ENCODE measurements at regions of chr13 and their contacts with region 1.

Region 1: DNA sequence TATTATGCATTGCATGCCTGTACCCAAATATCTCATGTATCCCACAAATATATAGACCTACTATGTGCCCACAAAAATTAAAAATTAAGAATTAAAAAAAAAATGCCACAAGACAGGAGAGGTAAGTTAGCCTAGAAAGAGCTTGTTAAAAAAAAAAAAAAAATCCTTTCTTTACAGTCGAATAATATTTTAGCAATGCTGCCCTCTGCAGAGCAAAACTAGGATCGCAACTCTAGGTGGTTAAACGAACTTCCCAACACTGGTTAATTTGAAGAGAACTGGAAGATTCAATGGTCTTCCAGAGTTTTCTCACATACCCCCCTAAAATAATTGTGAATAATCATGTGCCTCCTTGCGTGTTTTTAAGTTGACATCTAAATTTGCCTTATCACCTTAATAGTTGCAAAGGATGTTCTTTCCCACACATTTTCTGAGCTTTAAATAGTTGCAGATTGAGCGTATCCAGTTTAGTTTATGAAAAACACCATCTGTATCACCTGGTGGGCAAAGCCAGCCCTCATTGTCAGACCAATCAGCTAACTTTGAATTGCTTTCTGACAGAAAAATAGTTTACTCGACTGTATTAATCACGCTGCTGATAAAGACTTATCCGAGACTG is 47.4 kb upstream of the RCBTB2 start:
- DNase-seq: peak in 2 of 4 donors; percentile 57 to 74
- ATAC-seq: peak; percentile 83
- H3K4me3 ChIP-seq: no peak overlapping the region
- H3K27ac ChIP-seq: no peak overlapping the region
- H3K4me1 ChIP-seq: peaks cover 8 to 42% of the 10 kb centered on the region in 2 donors
- H3K27me3 ChIP-seq: no peaks in the 10 kb centered on the region
- CTCF ChIP-seq: peak; percentile 47 to 85

Region 2: DNA sequence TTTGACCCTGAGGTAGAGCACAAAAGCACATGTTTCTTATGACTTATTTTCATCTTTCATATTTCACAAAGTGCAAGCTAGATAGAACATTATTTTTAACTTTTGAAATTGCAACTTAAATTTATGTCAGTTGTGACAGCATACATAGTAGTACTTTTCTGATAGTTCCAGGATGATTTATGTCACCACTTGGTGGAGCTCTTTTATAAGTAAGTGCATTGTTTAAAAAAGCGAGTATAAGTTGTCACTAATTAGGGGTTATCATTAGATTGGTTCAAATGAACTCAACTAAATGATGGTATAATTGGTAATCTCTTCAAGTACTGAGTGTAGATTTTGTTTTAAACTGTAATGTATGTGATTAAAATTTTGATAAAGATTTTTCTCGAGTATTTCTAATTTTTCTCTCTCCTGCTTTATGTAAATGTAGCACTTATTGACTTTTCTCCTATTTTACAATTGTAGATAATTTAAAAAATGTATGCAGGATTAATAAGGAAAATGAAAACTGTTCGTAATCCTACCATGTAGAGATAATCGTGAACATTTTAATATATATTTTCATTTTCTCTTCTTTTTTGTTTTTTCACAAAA is 245.7 kb before region 1 on chr13:
- intact Hi-C with region 1: loop called in 1 of 2 experiments (anchors 5 kb)
- DNase-seq: peak in 1 of 4 donors; percentile 25
- ATAC-seq: peak; percentile 84
- H3K4me3 ChIP-seq: no peak overlapping the region
- H3K27ac ChIP-seq: no peak overlapping the region
- H3K4me1 ChIP-seq: peaks cover 0 to 9% of the 10 kb centered on the region in 2 donors
- H3K27me3 ChIP-seq: no peaks in the 10 kb centered on the region
- CTCF ChIP-seq: peak; percentile 30 to 41

Region 3: GRCh38 chr13:48380581-48380980 is 199.7 kb before region 1 on chr13:
- intact Hi-C with region 1: no loop called
- DNase-seq: no peak
- ATAC-seq: no peak
- H3K4me3 ChIP-seq: no peak overlapping the region
- H3K27ac ChIP-seq: no peak overlapping the region
- H3K4me1 ChIP-seq: no peaks in the 10 kb centered on the region
- H3K27me3 ChIP-seq: no peaks in the 10 kb centered on the region
- CTCF ChIP-seq: no peak

Region 4: DNA sequence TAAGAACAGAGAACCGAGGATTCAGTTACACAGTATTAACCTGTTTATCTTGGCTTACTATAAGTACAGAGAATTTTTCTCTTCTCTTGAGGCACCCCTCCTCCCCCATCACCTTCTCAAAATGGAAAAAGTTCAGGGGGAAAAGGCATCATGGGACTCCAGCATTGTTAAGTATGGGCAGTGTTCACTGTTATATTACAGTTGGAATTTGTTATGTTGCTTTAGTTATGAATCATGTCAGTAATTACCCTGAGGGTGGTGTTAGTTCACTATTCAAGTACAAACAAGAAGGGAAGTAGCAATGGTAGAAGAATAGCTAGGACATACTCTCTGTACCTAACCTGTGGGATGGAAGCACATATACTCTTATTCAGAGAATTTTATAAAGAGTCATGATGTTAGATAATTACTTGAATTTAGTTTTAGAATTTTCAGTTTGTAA is 179.4 kb before region 1 on chr13:
- intact Hi-C with region 1: loop called in 1 of 2 experiments (anchors 10 kb)
- DNase-seq: peak in 1 of 4 donors; percentile 19
- ATAC-seq: peak; percentile 86
- H3K4me3 ChIP-seq: no peak overlapping the region
- H3K27ac ChIP-seq: peak overlapping the region; percentile 48 to 60
- H3K4me1 ChIP-seq: peaks cover 33 to 56% of the 10 kb centered on the region in 2 donors
- H3K27me3 ChIP-seq: no peaks in the 10 kb centered on the region
- CTCF ChIP-seq: no peak

Region 5: DNA sequence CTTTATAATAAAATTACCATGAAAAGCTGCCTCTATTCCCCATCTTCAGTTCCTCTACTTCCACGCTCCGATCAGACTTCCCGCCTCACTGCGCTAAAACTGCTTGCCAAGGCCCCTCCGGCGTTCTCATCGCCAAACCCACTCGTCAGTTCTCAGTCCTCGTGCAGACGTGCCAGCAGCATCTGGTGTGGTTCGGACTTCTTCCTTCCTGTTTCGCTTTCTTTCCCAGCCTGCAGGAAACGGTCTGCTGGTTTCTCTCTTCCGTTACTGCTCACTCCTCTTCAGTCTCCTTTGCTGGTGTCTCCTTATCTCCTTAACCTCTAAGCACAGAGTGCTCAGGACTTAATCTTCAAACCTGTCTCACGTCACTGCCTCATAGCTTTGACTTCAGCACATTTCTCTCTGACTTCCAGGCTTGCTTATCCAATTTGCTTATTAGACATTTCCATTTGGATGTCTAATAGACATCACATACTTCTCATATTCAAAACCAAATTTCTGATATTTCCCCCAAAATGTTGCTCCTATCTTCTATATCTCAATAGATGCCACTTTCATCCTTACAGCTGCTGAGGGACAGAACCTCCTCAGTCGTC is 87.7 kb before region 1 on chr13:
- intact Hi-C with region 1: loop called in 1 of 2 experiments (anchors 10 kb)
- DNase-seq: peak; percentile 35 to 86 (median 76)
- ATAC-seq: peak; percentile 86
- H3K4me3 ChIP-seq: peak overlapping the region; percentile 8 to 37
- H3K27ac ChIP-seq: peak overlapping the region; percentile 77 to 91
- H3K4me1 ChIP-seq: peaks cover 10 to 68% of the 10 kb centered on the region in 2 donors
- H3K27me3 ChIP-seq: no peaks in the 10 kb centered on the region
- CTCF ChIP-seq: no peak